ENCODE measurements at regions of chr17 and their contacts with region 1.

Region 1: DNA sequence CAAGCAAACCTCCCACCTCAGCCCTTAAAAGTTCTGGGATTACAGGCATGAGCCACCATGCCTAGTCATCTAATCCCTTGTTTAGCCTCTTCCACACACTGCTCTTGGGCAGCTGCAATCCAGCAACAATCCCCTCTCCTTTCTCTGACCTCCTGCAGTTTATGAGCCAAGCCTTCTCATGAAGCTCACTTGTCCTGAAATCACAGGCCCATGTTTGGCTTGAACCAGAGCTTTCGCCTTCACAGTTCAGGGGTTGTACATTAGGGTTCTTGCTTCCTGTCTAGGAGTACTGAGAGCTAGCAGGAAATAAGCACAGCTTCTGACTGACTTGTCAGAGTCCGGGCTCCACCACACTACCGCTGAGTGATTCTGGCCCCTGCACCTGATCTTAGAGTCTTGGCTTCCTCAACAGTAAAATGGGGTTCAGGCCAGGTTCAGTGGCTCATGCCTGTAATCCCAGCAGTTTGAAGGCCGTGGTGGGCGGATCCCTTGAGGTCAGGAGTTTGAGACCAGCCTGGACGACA is 16.3 kb downstream of the ERAL1 start:
- DNase-seq: peak in 13 of 14 experiments; percentile 11 to 62 (median 34)
- ATAC-seq: peak; percentile 100
- H3K4me3 ChIP-seq: no peak overlapping the region
- H3K4me3 Mint-ChIP-seq: no peak overlapping the region
- H3K27ac ChIP-seq: peak overlapping the region; percentile 42 to 59
- H3K27ac Mint-ChIP-seq: peak overlapping the region; percentile 81
- H3K4me1 ChIP-seq: peaks cover 16% of the 10 kb centered on the region
- H3K4me1 Mint-ChIP-seq: peaks cover 12% of the 10 kb centered on the region
- H3K27me3 ChIP-seq: no peaks in the 10 kb centered on the region
- H3K27me3 Mint-ChIP-seq: no peaks in the 10 kb centered on the region
- CTCF ChIP-seq: no peak

Region 2: GRCh38 chr17:28327031-28327607 is 544.0 kb before region 1 on chr17:
- CTCF ChIA-PET with region 1: no interaction called
- POLR2A ChIA-PET with region 1: no interaction called
- intact Hi-C with region 1: no loop called
- DNase-seq: no peak
- ATAC-seq: no peak
- H3K4me3 ChIP-seq: no peak overlapping the region
- H3K4me3 Mint-ChIP-seq: no peak overlapping the region
- H3K27ac ChIP-seq: no peak overlapping the region
- H3K27ac Mint-ChIP-seq: no peak overlapping the region
- H3K4me1 ChIP-seq: no peaks in the 10 kb centered on the region
- H3K4me1 Mint-ChIP-seq: peaks cover 2% of the 10 kb centered on the region
- H3K27me3 ChIP-seq: no peaks in the 10 kb centered on the region
- H3K27me3 Mint-ChIP-seq: no peaks in the 10 kb centered on the region
- CTCF ChIP-seq: no peak

Region 3: DNA sequence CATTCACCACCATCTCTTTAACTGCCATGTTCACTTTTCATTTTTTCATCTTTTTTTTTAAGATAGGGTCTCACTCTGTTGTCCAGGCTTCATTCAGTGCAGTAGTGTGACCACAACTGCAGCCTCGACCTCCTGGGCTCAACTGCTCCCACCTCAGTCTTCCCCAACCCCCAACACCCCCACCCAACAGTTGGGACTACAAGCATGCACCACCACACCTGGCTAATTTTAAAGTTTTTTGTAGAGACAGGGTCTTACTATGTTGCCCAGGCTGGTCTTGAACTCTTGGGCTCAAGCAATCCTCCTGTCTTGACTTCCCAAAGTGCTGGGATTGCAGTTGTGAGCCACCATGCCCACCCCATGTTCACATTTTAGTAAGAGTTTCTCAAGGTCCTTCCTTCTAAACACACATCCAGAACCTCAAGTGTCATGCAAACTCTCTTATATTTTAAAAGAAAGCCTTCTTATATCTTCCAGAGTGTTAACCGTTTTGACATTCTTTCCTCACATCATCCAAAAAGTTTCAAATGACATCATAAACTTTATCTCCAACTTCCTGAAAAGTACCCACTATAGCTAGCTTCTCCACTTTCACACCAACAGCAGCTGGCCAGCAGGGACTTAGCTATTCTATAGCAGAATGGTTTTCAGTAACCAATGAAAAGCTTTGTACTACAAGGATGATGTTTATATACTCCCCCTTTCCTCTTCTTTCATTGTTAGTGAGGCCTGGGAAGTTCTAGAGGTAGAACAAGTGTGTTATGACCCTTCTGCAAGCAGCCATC is 78.0 kb before region 1 on chr17:
- CTCF ChIA-PET with region 1: no interaction called
- POLR2A ChIA-PET with region 1: no interaction called
- intact Hi-C with region 1: no loop called
- DNase-seq: no peak
- ATAC-seq: no peak
- H3K4me3 ChIP-seq: no peak overlapping the region
- H3K4me3 Mint-ChIP-seq: no peak overlapping the region
- H3K27ac ChIP-seq: no peak overlapping the region
- H3K27ac Mint-ChIP-seq: no peak overlapping the region
- H3K4me1 ChIP-seq: no peaks in the 10 kb centered on the region
- H3K4me1 Mint-ChIP-seq: peaks cover 32% of the 10 kb centered on the region
- H3K27me3 ChIP-seq: no peaks in the 10 kb centered on the region
- H3K27me3 Mint-ChIP-seq: no peaks in the 10 kb centered on the region
- CTCF ChIP-seq: no peak

Region 4: DNA sequence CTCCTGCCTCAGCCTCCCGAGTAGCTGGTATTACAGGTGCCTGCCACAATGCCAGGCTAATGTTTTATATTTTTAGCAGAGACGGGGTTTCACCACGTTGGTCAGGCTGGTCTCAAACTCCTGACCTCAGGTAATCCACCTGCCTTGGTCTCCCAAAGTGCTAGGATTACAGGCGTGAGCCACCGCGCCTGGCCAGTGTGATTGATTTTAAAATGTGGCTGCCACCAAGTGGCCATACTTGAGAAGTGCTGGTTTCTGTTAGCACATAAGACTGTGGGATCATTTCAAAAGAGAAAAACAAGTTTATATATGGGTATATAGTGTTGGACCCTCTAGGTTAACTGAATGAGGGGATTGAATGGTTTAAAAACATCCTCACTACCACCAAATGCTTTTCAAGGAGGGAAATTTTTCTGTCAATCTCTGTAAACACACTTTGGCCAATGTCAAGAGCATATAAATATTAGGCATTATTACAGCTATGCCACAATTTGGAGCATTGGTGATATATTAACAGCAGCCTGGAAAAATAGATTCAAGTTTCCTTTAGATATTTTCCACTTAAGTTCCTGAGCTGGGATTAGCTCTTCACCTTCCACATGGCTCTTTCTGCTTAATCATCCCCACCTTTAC is 45.3 kb after region 1 on chr17:
- CTCF ChIA-PET with region 1: no interaction called
- POLR2A ChIA-PET with region 1: no interaction called
- intact Hi-C with region 1: loop called in 1 of 2 experiments (anchors 1 kb)
- DNase-seq: peak in 12 of 14 experiments; percentile 22 to 72 (median 38)
- ATAC-seq: peak; percentile 86
- H3K4me3 ChIP-seq: no peak overlapping the region
- H3K4me3 Mint-ChIP-seq: no peak overlapping the region
- H3K27ac ChIP-seq: no peak overlapping the region
- H3K27ac Mint-ChIP-seq: peak overlapping the region; percentile 34
- H3K4me1 ChIP-seq: no peaks in the 10 kb centered on the region
- H3K4me1 Mint-ChIP-seq: peaks cover 8% of the 10 kb centered on the region
- H3K27me3 ChIP-seq: no peaks in the 10 kb centered on the region
- H3K27me3 Mint-ChIP-seq: no peaks in the 10 kb centered on the region
- CTCF ChIP-seq: peak; percentile 85